Activated B cell treated with CpG ODN at 0.5 μM for 24 hours (primary cell): ENCODE measurements at regions of chr3 and their contacts with region 1.

Region 1: DNA sequence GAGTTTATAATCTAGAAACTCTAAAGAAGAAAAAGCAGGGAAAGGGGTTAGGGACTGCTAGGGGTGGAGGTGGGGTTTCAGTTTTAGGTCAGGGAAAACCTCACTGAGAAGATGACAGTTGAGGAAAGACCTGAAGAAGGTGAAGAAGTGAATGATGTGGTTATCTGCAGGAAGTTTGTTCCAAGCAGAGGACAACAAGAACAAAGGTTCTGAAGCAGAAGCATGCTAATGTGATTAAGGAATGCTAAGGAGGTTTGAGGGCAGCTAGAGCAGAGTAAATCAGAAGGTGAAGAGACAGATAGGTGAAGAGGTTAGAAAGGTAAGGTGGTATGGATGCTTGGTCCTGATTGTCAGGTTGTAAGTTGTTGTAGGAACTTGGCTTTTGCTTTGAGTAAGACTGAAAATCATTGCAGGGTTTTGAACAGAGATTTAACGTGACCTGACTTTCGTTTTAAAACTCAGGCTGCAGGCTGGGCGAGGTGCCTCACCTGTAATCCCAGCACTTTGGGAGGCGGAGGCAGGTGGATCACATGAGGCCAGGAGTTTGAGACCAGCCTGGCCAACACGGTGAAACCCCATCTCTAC is 8.6 kb downstream of the OXSR1 start:
- DNase-seq: no peak
- ATAC-seq: no peak
- H3K4me3 Mint-ChIP-seq: no peak overlapping the region
- H3K27ac Mint-ChIP-seq: no peak overlapping the region
- H3K4me1 Mint-ChIP-seq: peaks cover 58% of the 10 kb centered on the region
- H3K27me3 Mint-ChIP-seq: no peaks in the 10 kb centered on the region
- CTCF ChIP-seq: no peak

Region 2: GRCh38 chr3:38210141-38210757 is 36.3 kb after region 1 on chr3:
- CTCF ChIA-PET with region 1: no interaction called
- POLR2A ChIA-PET with region 1: no interaction called
- intact Hi-C with region 1: loop called (anchors 2 kb)
- DNase-seq: no peak
- ATAC-seq: peak; percentile 86
- H3K4me3 Mint-ChIP-seq: no peak overlapping the region
- H3K27ac Mint-ChIP-seq: peak overlapping the region; percentile 82
- H3K4me1 Mint-ChIP-seq: peaks cover 63% of the 10 kb centered on the region
- H3K27me3 Mint-ChIP-seq: no peaks in the 10 kb centered on the region
- CTCF ChIP-seq: no peak

Region 3: GRCh38 chr3:38397320-38397719 is 223.4 kb after region 1 on chr3:
- CTCF ChIA-PET with region 1: no interaction called
- POLR2A ChIA-PET with region 1: no interaction called
- intact Hi-C with region 1: no loop called
- DNase-seq: no peak
- ATAC-seq: no peak
- H3K4me3 Mint-ChIP-seq: no peak overlapping the region
- H3K27ac Mint-ChIP-seq: no peak overlapping the region
- H3K4me1 Mint-ChIP-seq: no peaks in the 10 kb centered on the region
- H3K27me3 Mint-ChIP-seq: no peaks in the 10 kb centered on the region
- CTCF ChIP-seq: no peak